CD4-positive, alpha-beta memory T cell (primary cell): ENCODE measurements at regions of chr9 and their contacts with region 1.

Region 1: DNA sequence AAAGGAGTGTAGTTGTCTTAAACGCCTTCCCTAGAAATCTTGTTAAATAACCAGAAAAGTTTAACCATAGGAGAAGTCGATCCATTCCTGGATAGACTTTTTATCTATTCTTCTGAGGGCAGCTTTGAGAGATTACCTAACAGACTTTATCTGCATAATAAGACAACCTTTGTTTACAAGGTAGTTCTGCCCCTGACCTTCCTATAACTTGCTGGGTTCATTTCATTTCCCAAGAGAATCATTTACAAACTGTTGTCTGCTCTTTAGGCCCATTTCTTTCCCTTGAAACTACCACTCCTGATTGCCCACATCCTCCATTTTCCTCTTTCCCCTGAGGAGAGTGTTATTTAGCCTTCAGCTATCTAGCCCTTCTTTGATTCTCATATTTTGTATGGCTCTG is 65.9 kb upstream of the VPS13A start:
- DNase-seq: no peak
- H3K4me3 ChIP-seq: no peak overlapping the region
- H3K4me3 Mint-ChIP-seq: no peak overlapping the region
- H3K27ac ChIP-seq: no peak overlapping the region
- H3K27ac Mint-ChIP-seq: no peak overlapping the region
- H3K4me1 ChIP-seq: no peaks in the 10 kb centered on the region
- H3K4me1 Mint-ChIP-seq: no peaks in the 10 kb centered on the region
- H3K27me3 ChIP-seq: no peaks in the 10 kb centered on the region
- H3K27me3 Mint-ChIP-seq: peaks cover 1 to 6% of the 10 kb centered on the region in 2 donors

Region 2: GRCh38 chr9:76231001-76231400 is 880.4 kb before region 1 on chr9:
- CTCF ChIA-PET with region 1: no interaction called
- POLR2A ChIA-PET with region 1: no interaction called
- intact Hi-C with region 1: no loop called
- DNase-seq: no peak
- H3K4me3 ChIP-seq: no peak overlapping the region
- H3K4me3 Mint-ChIP-seq: no peak overlapping the region
- H3K27ac ChIP-seq: no peak overlapping the region
- H3K27ac Mint-ChIP-seq: no peak overlapping the region
- H3K4me1 ChIP-seq: no peaks in the 10 kb centered on the region
- H3K4me1 Mint-ChIP-seq: no peaks in the 10 kb centered on the region
- H3K27me3 ChIP-seq: no peaks in the 10 kb centered on the region
- H3K27me3 Mint-ChIP-seq: no peaks in the 10 kb centered on the region

Region 3: DNA sequence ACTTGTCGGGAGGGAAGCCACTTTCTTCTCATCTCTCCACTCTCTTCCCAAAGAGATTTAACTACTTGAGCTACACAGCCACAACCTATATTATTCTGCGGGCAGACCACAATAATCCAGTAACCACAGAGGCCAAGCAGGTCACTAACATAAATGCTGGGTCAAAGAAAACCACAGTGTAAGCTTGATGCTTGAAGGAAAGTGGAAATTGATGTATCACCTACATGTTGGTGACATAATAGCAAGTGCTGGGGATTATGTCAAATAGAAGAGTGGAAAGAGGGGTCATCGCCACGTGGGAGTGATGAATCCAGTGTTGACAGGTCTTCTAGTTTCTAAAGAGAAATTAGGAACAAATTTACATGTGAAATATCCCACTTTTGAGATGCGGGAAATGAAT is 758.1 kb before region 1 on chr9:
- CTCF ChIA-PET with region 1: no interaction called
- POLR2A ChIA-PET with region 1: no interaction called
- intact Hi-C with region 1: loop called (anchors 5 kb)
- DNase-seq: no peak
- H3K4me3 ChIP-seq: no peak overlapping the region
- H3K4me3 Mint-ChIP-seq: no peak overlapping the region
- H3K27ac ChIP-seq: no peak overlapping the region
- H3K27ac Mint-ChIP-seq: no peak overlapping the region
- H3K4me1 ChIP-seq: no peaks in the 10 kb centered on the region
- H3K4me1 Mint-ChIP-seq: no peaks in the 10 kb centered on the region
- H3K27me3 ChIP-seq: no peaks in the 10 kb centered on the region
- H3K27me3 Mint-ChIP-seq: peaks cover 4 to 9% of the 10 kb centered on the region in 2 donors

Region 4: DNA sequence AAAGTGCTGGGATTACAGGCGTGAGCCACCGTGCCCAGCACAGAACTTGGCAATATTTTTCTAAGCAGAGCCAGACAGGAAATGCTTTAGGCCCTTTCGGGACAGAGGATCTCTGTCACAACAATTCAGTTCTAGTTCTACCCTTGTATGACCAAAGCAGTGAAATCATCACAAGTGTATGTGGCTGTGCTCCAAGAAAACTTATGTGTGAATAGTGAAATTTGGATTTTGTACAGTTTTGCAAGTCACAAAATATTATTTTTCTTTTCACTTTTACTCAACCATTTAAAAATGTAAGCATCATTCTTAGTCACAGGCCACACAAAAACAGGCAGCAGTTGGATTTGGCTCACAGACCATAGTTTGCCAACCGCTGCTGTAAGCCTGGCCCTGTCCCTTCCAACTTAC is 185.1 kb before region 1 on chr9:
- CTCF ChIA-PET with region 1: no interaction called
- POLR2A ChIA-PET with region 1: no interaction called
- intact Hi-C with region 1: no loop called
- DNase-seq: no peak
- H3K4me3 ChIP-seq: no peak overlapping the region
- H3K4me3 Mint-ChIP-seq: no peak overlapping the region
- H3K27ac ChIP-seq: no peak overlapping the region
- H3K27ac Mint-ChIP-seq: no peak overlapping the region
- H3K4me1 ChIP-seq: no peaks in the 10 kb centered on the region
- H3K4me1 Mint-ChIP-seq: no peaks in the 10 kb centered on the region
- H3K27me3 ChIP-seq: no peaks in the 10 kb centered on the region
- H3K27me3 Mint-ChIP-seq: peaks cover 0 to 2% of the 10 kb centered on the region in 2 donors